Panc1 (cell line): ENCODE measurements at regions of chr10 and their contacts with region 1.

Region 1: DNA sequence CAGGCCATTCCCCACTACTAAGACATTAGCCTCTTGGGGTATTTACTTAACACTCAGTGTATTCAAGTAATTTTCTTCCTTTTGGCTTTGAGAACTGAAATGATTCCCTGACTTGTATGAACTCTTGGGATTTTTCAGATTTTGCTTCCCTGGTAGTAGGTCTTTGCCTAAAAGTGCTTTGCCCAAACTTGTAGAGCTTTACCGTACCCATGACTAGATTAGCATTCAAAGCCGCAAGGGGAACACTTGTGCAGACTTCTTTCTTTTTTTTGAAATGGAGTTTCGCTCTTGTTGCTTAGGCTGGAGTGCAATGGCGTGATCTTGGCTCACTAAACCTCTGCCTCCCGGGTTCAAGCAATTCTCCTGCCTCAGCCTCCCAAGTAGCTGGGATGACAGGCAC is 6.1 kb upstream of the STAM start:
- DNase-seq: no peak
- ATAC-seq: no peak
- H3K4me3 ChIP-seq: no peak overlapping the region
- H3K27ac ChIP-seq: no peak overlapping the region
- H3K4me1 ChIP-seq: no peaks in the 10 kb centered on the region
- H3K27me3 ChIP-seq: no peaks in the 10 kb centered on the region
- CTCF ChIP-seq: no peak

Region 2: GRCh38 chr10:15684768-15685167 is 1953.1 kb before region 1 on chr10:
- CTCF ChIA-PET with region 1: interaction called, 11 read pairs
- POLR2A ChIA-PET with region 1: no interaction called
- in situ Hi-C with region 1: no loop called
- intact Hi-C with region 1: no loop called
- DNase-seq: no peak
- ATAC-seq: no peak
- H3K4me3 ChIP-seq: no peak overlapping the region
- H3K27ac ChIP-seq: no peak overlapping the region
- H3K4me1 ChIP-seq: no peaks in the 10 kb centered on the region
- H3K27me3 ChIP-seq: peaks cover 2% of the 10 kb centered on the region; the same call in 1 of the 2 replicates
- CTCF ChIP-seq: no peak